Prostate gland (tissue), 2 donors: ENCODE measurements at regions of chr14 and their contacts with region 1.

Region 1: GRCh38 chr14:75307700-75308379 is 29.2 kb downstream of the FOS start:
- DNase-seq: peak; percentile 86
- H3K4me3 ChIP-seq: no peak overlapping the region
- H3K27ac ChIP-seq: no peak overlapping the region
- H3K4me1 ChIP-seq: no peaks in the 10 kb centered on the region
- H3K27me3 ChIP-seq: no peaks in the 10 kb centered on the region
- CTCF ChIP-seq: peak; percentile 72 to 94 (median 92)
- POLR2A ChIP-seq: no peak

Region 2: DNA sequence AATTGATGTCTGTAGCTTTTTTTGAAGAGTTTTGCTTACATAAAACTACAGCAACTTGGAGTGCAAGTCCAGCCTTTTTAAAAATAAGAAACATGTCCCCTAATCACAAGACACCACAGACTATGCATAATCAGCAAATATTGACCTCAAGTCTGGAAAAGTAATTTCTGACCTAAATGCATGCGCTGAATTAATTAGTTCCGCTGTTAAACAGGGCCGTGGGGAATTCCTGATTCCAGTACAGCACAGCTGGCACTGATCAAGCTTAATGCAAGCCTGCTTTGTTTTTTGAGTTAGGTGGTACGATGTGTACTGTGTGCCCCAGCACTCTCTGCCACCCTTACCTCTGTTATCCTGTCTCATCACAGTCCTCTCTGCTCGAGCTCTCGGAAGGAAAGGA is 265.8 kb before region 1 on chr14:
- intact Hi-C with region 1: no loop called
- DNase-seq: no peak
- H3K4me3 ChIP-seq: no peak overlapping the region
- H3K27ac ChIP-seq: no peak overlapping the region
- H3K4me1 ChIP-seq: no peaks in the 10 kb centered on the region
- H3K27me3 ChIP-seq: no peaks in the 10 kb centered on the region
- CTCF ChIP-seq: no peak
- POLR2A ChIP-seq: no peak

Region 3: GRCh38 chr14:75132382-75133086 is 175.3 kb before region 1 on chr14:
- intact Hi-C with region 1: loop called (anchors 1 kb)
- DNase-seq: peak; percentile 76
- H3K4me3 ChIP-seq: no peak overlapping the region
- H3K27ac ChIP-seq: peak overlapping the region; percentile 36 to 43
- H3K4me1 ChIP-seq: no peaks in the 10 kb centered on the region
- H3K27me3 ChIP-seq: no peaks in the 10 kb centered on the region
- CTCF ChIP-seq: peak; percentile 37 to 90 (median 84)
- POLR2A ChIP-seq: no peak

Region 4: GRCh38 chr14:75427482-75428229 is 119.8 kb after region 1 on chr14 and contains the start of gene JDP2:
- intact Hi-C with region 1: loop called (anchors 10 kb)
- DNase-seq: peak; percentile 83
- H3K4me3 ChIP-seq: peak within 1 kb of the TSS; percentile 62 to 63
- H3K27ac ChIP-seq: peak within 1 kb of the TSS; percentile 81 to 83
- H3K4me1 ChIP-seq: peaks cover 9% of the 10 kb centered on the region
- H3K27me3 ChIP-seq: no peaks in the 10 kb centered on the region
- CTCF ChIP-seq: peak in 2 of 4 experiments; percentile 20 to 28
- POLR2A ChIP-seq: peak; percentile 64
- total RNA-seq, gene JDP2: 27.1 to 34.0 TPM

Region 5: GRCh38 chr14:75487155-75487671 is 179.4 kb after region 1 on chr14:
- intact Hi-C with region 1: loop called (anchors 1 kb)
- DNase-seq: no peak
- H3K4me3 ChIP-seq: no peak overlapping the region
- H3K27ac ChIP-seq: no peak overlapping the region
- H3K4me1 ChIP-seq: no peaks in the 10 kb centered on the region
- H3K27me3 ChIP-seq: no peaks in the 10 kb centered on the region
- CTCF ChIP-seq: no peak
- POLR2A ChIP-seq: no peak

Region 6: DNA sequence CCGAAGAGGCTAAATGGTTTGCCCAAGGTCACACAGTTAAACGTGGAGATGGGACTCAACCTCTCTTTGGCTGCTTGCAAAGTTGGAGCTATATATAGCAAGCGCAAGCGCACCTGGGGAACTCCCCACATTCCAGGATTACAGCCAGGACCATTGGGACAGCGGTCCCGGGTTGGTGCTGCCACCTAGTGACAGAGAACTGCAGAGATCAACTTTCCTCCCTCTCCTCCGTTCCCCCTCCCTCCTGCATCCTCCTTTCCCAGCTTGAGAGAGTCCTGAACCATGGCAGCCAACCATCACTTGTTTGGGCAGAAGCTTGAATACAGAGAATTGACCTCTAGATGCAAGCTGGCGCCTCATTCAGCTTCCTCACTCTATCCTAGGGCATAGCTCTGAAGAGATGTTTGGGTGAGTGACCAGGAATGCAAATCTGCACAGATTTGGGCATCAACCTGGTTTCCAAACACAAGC is 253.2 kb after region 1 on chr14:
- intact Hi-C with region 1: loop called (anchors 5 kb)
- DNase-seq: peak; percentile 90
- H3K4me3 ChIP-seq: no peak overlapping the region
- H3K27ac ChIP-seq: no peak overlapping the region
- H3K4me1 ChIP-seq: no peaks in the 10 kb centered on the region
- H3K27me3 ChIP-seq: no peaks in the 10 kb centered on the region
- CTCF ChIP-seq: peak; percentile 82 to 93 (median 90)
- POLR2A ChIP-seq: no peak

Region 7: GRCh38 chr14:75654127-75654732 is 346.4 kb after region 1 on chr14:
- intact Hi-C with region 1: loop called (anchors 5 kb)
- DNase-seq: peak; percentile 78
- H3K4me3 ChIP-seq: no peak overlapping the region
- H3K27ac ChIP-seq: no peak overlapping the region
- H3K4me1 ChIP-seq: no peaks in the 10 kb centered on the region
- H3K27me3 ChIP-seq: no peaks in the 10 kb centered on the region
- CTCF ChIP-seq: peak; percentile 89 to 95 (median 94)
- POLR2A ChIP-seq: no peak